CD4-positive, alpha-beta memory T cell (primary cell): ENCODE measurements at regions of chr20 and their contacts with region 1.

Region 1: DNA sequence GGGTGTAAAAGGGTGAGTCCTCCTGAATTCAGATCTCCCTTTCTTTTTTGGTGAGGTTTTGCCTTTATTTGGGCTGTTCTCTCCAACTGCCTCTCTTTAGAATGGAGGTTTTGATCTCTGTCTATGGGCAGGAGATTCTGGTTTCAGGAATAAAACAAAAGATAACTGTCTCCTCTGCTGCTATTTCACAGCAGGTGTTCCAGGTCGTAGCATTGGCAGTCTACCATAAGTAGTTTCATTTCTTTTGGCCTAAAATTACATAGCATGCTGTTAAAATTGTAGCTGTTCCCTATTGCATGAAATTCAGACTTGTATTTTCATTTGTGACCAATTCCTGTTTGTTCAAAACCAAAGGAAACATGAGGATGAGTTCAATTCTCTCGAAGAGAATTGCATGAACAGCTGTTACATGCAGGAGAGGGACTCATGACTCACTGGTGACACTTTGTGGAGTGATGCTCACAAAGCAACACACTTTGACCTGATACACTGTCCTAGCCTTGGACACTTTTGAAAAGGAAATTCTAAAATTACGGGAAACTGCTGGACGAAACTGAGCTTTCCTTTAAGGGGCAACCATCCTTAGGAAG is 76.8 kb upstream of the SIRPG start:
- DNase-seq: peak in 4 of 5 donors; percentile 40 to 45 (median 42)
- H3K4me3 ChIP-seq: no peak overlapping the region
- H3K4me3 Mint-ChIP-seq: peak overlapping the region in 2 of 8 donors; percentile 17 to 30
- H3K27ac ChIP-seq: no peak overlapping the region
- H3K27ac Mint-ChIP-seq: peak overlapping the region in 3 of 7 donors; percentile 8 to 25 (median 25)
- H3K4me1 ChIP-seq: peaks cover 33% of the 10 kb centered on the region
- H3K4me1 Mint-ChIP-seq: peaks cover 7 to 23% (median 13%) of the 10 kb centered on the region in 4 donors
- H3K27me3 ChIP-seq: no peaks in the 10 kb centered on the region
- H3K27me3 Mint-ChIP-seq: peaks cover 0 to under 1% of the 10 kb centered on the region in 2 donors

Region 2: GRCh38 chr20:1503564-1504227 is 230.7 kb before region 1 on chr20:
- CTCF ChIA-PET with region 1: interaction called, 22 read pairs
- POLR2A ChIA-PET with region 1: no interaction called
- intact Hi-C with region 1: no loop called
- DNase-seq: peak; percentile 76 to 83 (median 76)
- H3K4me3 ChIP-seq: no peak overlapping the region
- H3K4me3 Mint-ChIP-seq: no peak overlapping the region
- H3K27ac ChIP-seq: no peak overlapping the region
- H3K27ac Mint-ChIP-seq: peak overlapping the region in 1 of 7 donors; percentile 70
- H3K4me1 ChIP-seq: peaks cover 3% of the 10 kb centered on the region
- H3K4me1 Mint-ChIP-seq: peaks cover 3 to 6% (median 4%) of the 10 kb centered on the region in 4 donors
- H3K27me3 ChIP-seq: peaks cover 6% of the 10 kb centered on the region
- H3K27me3 Mint-ChIP-seq: peaks cover 25 to 35% of the 10 kb centered on the region in 2 donors

Region 3: DNA sequence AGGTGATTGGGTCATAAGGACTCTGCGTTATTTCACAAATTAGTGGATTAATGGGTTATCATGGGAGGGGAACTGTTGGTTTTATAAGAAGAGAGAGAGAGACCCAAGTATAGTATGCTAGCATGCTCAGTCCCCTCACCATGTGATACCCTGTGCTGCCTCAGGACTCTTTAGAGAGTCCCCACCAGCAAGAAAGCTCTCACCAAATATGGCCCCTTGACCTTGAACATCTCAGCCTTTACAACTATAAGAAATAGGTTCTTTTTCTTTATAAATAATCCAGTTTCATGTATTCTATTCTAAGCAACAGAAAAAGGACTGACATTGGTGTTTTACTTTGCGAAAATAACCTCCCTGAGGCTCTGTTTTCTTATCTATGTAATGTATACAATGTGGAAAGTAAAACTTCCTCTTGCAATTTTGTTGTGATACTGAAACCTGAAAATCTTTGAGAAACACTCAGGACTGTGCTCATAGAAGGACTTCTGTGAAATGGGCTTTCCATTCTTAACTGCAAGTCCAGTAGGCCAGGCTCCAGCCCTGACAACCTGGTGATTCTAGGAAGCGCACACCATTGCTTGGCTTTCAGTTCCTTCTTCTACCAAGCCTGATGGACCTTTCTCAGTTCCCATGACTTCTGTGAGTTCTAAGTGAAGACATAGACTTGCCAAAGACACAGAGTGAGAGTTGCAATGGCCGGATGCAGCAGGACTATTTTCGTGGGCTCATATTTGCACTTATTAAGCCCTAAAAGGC is 198.8 kb before region 1 on chr20:
- CTCF ChIA-PET with region 1: interaction called, 37 read pairs
- POLR2A ChIA-PET with region 1: interaction called, 3 read pairs
- intact Hi-C with region 1: loop called (anchors 1 kb)
- DNase-seq: no peak
- H3K4me3 ChIP-seq: no peak overlapping the region
- H3K4me3 Mint-ChIP-seq: no peak overlapping the region
- H3K27ac ChIP-seq: no peak overlapping the region
- H3K27ac Mint-ChIP-seq: no peak overlapping the region
- H3K4me1 ChIP-seq: no peaks in the 10 kb centered on the region
- H3K4me1 Mint-ChIP-seq: peaks cover 0 to 6% (median 4%) of the 10 kb centered on the region in 4 donors
- H3K27me3 ChIP-seq: no peaks in the 10 kb centered on the region
- H3K27me3 Mint-ChIP-seq: peaks cover 0 to 1% of the 10 kb centered on the region in 2 donors

Region 4: GRCh38 chr20:1576641-1577040 is 157.7 kb before region 1 on chr20:
- CTCF ChIA-PET with region 1: no interaction called
- POLR2A ChIA-PET with region 1: no interaction called
- intact Hi-C with region 1: loop called (anchors 1 kb)
- DNase-seq: no peak
- H3K4me3 ChIP-seq: no peak overlapping the region
- H3K4me3 Mint-ChIP-seq: no peak overlapping the region
- H3K27ac ChIP-seq: no peak overlapping the region
- H3K27ac Mint-ChIP-seq: peak overlapping the region in 1 of 7 donors; percentile 7
- H3K4me1 ChIP-seq: no peaks in the 10 kb centered on the region
- H3K4me1 Mint-ChIP-seq: no peaks in the 10 kb centered on the region
- H3K27me3 ChIP-seq: no peaks in the 10 kb centered on the region
- H3K27me3 Mint-ChIP-seq: no peaks in the 10 kb centered on the region

Region 5: DNA sequence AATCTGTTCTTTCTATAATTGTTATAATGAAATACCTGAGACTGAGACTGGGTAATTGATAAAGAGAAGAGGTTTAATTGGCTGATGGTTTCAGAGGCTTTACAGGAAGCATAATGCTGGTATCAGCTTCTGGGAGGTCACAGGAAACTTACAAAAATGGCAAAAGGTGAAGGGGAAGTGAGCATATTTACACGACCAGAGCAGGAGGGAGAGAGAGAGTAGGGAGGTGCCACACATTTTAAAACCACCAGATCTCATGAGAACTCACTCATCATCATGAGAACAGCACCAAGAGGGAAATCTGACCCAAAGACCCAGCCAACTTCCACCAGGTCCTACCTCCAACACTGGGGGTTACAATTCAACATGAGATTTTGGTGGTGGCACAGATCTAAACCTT is 111.9 kb before region 1 on chr20:
- CTCF ChIA-PET with region 1: interaction called, 3 read pairs
- POLR2A ChIA-PET with region 1: no interaction called
- intact Hi-C with region 1: loop called (anchors 2 kb)
- DNase-seq: peak in 4 of 5 donors; percentile 27 to 45 (median 31)
- H3K4me3 ChIP-seq: no peak overlapping the region
- H3K4me3 Mint-ChIP-seq: peak overlapping the region in 7 of 8 donors; percentile 17 to 76 (median 62)
- H3K27ac ChIP-seq: no peak overlapping the region
- H3K27ac Mint-ChIP-seq: peak overlapping the region; percentile 11 to 90 (median 86)
- H3K4me1 ChIP-seq: peaks cover 71% of the 10 kb centered on the region
- H3K4me1 Mint-ChIP-seq: peaks cover 55 to 91% (median 67%) of the 10 kb centered on the region in 4 donors
- H3K27me3 ChIP-seq: no peaks in the 10 kb centered on the region
- H3K27me3 Mint-ChIP-seq: no peaks in the 10 kb centered on the region

Region 6: DNA sequence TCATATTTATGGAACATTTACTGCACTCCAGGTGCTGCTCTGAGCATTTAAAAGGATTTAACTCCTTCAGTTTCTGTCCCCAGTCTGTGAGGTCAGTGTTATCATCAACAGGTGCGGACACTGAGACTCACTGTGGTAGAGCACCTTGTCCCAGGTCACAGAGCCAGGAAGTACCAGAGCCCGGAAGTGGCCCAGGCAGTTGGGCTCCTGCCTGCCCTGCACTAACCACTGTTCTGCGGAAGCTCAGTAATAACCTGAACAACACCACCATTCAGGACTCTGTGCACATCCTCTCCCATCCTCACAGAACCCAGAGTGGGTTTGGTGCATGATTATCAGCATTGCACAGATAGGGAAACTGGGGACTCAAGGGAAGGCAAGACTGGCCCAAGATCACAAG is 60.0 kb before region 1 on chr20:
- CTCF ChIA-PET with region 1: interaction called, 13 read pairs
- POLR2A ChIA-PET with region 1: interaction called, 5 read pairs
- intact Hi-C with region 1: no loop called
- DNase-seq: peak; percentile 39 to 66 (median 44)
- H3K4me3 ChIP-seq: peak overlapping the region in 1 of 2 donors; percentile 15
- H3K4me3 Mint-ChIP-seq: peak overlapping the region in 7 of 8 donors; percentile 49 to 89 (median 74)
- H3K27ac ChIP-seq: peak overlapping the region; percentile 27
- H3K27ac Mint-ChIP-seq: peak overlapping the region; percentile 76 to 91 (median 85)
- H3K4me1 ChIP-seq: peaks cover 82% of the 10 kb centered on the region
- H3K4me1 Mint-ChIP-seq: peaks cover 67 to 97% (median 85%) of the 10 kb centered on the region in 4 donors
- H3K27me3 ChIP-seq: no peaks in the 10 kb centered on the region
- H3K27me3 Mint-ChIP-seq: no peaks in the 10 kb centered on the region

Region 7: GRCh38 chr20:1776681-1777475 is 42.5 kb after region 1 on chr20:
- CTCF ChIA-PET with region 1: interaction called, 19 read pairs
- POLR2A ChIA-PET with region 1: interaction called, 3 read pairs
- intact Hi-C with region 1: no loop called
- DNase-seq: peak; percentile 63 to 80 (median 75)
- H3K4me3 ChIP-seq: peak overlapping the region; percentile 69 to 76
- H3K4me3 Mint-ChIP-seq: peak overlapping the region; percentile 72 to 94 (median 86)
- H3K27ac ChIP-seq: peak overlapping the region; percentile 40
- H3K27ac Mint-ChIP-seq: peak overlapping the region in 5 of 7 donors; percentile 15 to 92 (median 55)
- H3K4me1 ChIP-seq: peaks cover 14% of the 10 kb centered on the region
- H3K4me1 Mint-ChIP-seq: peaks cover 12 to 20% (median 15%) of the 10 kb centered on the region in 4 donors
- H3K27me3 ChIP-seq: no peaks in the 10 kb centered on the region
- H3K27me3 Mint-ChIP-seq: peaks cover 7 to 15% of the 10 kb centered on the region in 2 donors

Region 8: GRCh38 chr20:1790386-1790785 is 56.0 kb after region 1 on chr20:
- CTCF ChIA-PET with region 1: no interaction called
- POLR2A ChIA-PET with region 1: no interaction called
- intact Hi-C with region 1: no loop called
- DNase-seq: no peak
- H3K4me3 ChIP-seq: no peak overlapping the region
- H3K4me3 Mint-ChIP-seq: no peak overlapping the region
- H3K27ac ChIP-seq: no peak overlapping the region
- H3K27ac Mint-ChIP-seq: no peak overlapping the region
- H3K4me1 ChIP-seq: no peaks in the 10 kb centered on the region
- H3K4me1 Mint-ChIP-seq: no peaks in the 10 kb centered on the region
- H3K27me3 ChIP-seq: peaks cover 19% of the 10 kb centered on the region
- H3K27me3 Mint-ChIP-seq: peaks cover 34 to 49% of the 10 kb centered on the region in 2 donors

Region 9: DNA sequence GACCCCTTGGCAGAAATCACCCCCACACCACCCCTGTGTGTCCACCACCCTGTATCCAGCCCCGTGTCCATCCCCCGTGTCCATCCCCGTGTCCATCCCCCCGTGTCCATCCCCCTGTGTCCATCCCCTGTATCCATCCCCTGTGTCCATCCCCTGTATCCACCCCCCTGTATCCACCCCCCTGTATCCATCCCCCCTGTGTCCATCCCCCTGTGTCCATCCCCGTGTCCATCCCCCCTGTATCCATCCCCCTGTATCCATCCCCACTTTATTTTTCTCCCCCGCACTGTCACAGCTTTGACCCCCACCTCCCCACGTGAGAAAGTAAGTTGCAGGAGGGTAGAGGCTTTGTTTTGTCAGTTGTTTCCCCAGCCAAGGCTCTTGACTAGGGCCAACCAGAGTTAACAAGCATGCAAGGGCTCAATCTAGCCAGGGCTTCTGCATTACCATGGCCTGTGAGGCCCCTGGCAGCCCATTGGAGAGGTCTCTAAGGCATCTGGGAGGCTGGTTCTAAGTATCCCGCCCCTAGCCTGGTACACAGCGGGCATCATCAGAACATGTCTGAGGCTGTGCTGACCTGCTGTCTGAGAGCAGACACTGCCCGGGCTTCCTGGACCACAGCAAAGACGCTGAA is 142.7 kb after region 1 on chr20:
- CTCF ChIA-PET with region 1: no interaction called
- POLR2A ChIA-PET with region 1: no interaction called
- intact Hi-C with region 1: no loop called
- DNase-seq: no peak
- H3K4me3 ChIP-seq: no peak overlapping the region
- H3K4me3 Mint-ChIP-seq: no peak overlapping the region
- H3K27ac ChIP-seq: no peak overlapping the region
- H3K27ac Mint-ChIP-seq: no peak overlapping the region
- H3K4me1 ChIP-seq: no peaks in the 10 kb centered on the region
- H3K4me1 Mint-ChIP-seq: no peaks in the 10 kb centered on the region
- H3K27me3 ChIP-seq: no peaks in the 10 kb centered on the region
- H3K27me3 Mint-ChIP-seq: peaks cover 0 to 11% of the 10 kb centered on the region in 2 donors